Naive thymus-derived CD4-positive, alpha-beta T cell (primary cell): ENCODE measurements at regions of chr3 and their contacts with region 1.

Region 1: DNA sequence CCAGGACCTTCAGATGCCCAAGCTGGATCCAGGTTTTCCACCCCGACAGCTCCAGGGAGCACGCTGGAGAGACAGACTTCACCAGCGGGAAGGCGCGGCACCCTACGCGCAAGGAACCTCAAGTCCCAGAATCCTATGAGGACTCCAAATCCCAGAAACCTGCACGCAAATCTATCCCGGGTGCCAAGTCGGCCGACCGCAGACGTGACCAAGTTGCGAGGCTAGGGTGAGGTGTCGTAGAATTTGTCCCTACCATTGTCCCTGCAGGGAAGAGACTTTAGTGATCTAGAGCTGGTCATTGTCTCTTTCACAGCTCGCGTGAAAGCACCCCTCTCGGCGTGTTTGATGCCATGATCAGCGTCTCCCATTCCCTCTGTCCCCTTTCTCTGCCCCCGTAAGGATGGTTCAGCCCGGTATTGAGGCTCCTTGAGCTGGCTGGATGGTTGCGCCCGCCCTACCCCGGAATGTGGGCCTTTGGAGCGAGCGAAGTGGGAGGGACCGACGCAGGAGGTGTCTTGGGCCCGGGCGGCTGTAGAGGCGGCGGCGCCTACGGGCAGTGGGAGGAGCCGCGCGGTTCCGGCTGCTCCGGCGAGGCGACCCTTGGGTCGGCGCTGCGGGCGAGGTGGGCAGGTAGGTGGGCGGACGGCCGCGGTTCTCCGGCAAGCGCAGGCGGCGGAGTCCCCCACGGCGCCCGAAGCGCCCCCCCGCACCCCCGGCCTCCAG is at the start of gene PRKCI:
- DNase-seq: peak; percentile 63 to 88 (median 83)
- ATAC-seq: peak; percentile 96
- H3K4me3 ChIP-seq: peak within 1 kb of the TSS; percentile 98
- H3K4me3 Mint-ChIP-seq: peak within 1 kb of the TSS; percentile 75 to 97 (median 95)
- H3K27ac ChIP-seq: peak within 1 kb of the TSS; percentile 75
- H3K27ac Mint-ChIP-seq: peak within 1 kb of the TSS; percentile 82 to 97 (median 95)
- H3K4me1 ChIP-seq: peaks cover 0 to 3% of the 10 kb centered on the region in 2 donors
- H3K4me1 Mint-ChIP-seq: peaks cover 15 to 50% (median 38%) of the 10 kb centered on the region in 7 donors
- H3K27me3 ChIP-seq: no peaks in the 10 kb centered on the region
- H3K27me3 Mint-ChIP-seq: peaks cover 0 to 4% (median 0%) of the 10 kb centered on the region in 5 donors
- total RNA-seq, gene PRKCI: 14.7 to 26.2 (median 20.5) TPM

Region 2: DNA sequence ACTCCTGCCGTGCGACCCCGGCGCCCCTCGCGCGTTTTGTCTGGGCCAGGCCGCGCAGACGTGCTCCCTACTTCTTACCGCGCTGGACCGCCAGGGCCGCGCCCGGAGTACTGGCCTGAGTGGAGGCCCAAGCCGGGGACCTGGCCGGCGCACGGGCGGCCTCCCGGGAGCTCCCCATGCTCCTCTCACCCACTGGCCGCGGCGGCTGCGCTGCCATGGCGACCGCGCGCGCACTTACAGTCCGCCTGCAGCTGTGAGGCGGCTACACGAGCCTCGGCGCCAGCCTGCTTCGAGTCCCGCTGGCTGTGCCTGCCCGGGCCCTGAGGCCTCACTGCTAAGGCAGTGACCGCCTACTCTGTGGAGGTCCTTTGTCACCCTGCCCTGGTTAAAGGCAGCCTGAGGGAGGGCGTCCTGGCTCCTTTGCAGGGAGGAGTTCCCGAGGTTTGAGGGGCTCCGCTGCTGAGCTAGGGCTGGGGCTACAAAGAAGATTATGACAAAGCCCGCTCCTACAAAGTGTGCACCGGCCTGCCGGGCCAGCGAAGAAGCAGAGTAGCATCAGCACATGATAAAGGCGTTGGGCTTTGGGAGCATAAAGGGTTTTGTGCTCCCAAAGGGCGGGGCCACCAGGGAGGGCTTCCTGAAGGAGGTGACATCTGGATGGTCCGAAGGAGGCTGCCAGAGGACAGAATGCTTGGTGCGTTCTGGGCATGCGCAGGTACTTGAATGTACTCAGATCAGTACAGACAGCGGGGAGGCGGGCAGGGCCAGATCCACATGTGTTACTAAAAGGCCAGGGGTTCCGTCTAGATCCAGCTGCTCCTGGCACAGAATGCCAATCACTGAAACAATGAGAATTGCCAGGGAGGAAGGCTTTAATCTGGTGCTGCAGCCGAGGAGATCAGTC is 409.5 kb before region 1 on chr3 and contains the starts of genes LRRC34 and LRRIQ4:
- CTCF ChIA-PET with region 1: no interaction called
- POLR2A ChIA-PET with region 1: no interaction called
- intact Hi-C with region 1: loop called in 1 of 2 experiments (anchors 1 kb)
- DNase-seq: peak; percentile 43 to 72 (median 52)
- ATAC-seq: peak; percentile 72
- H3K4me3 ChIP-seq: peak within 1 kb of the TSS; percentile 85
- H3K4me3 Mint-ChIP-seq: peak within 1 kb of the TSS; percentile 79 to 91 (median 86)
- H3K27ac ChIP-seq: peak within 1 kb of the TSS; percentile 59
- H3K27ac Mint-ChIP-seq: peak within 1 kb of the TSS; percentile 3 to 92 (median 71)
- H3K4me1 ChIP-seq: peaks cover 4 to 6% of the 10 kb centered on the region in 2 donors
- H3K4me1 Mint-ChIP-seq: peaks cover 21 to 40% (median 25%) of the 10 kb centered on the region in 7 donors
- H3K27me3 ChIP-seq: no peaks in the 10 kb centered on the region
- H3K27me3 Mint-ChIP-seq: peaks cover 0 to 18% (median 2%) of the 10 kb centered on the region in 5 donors
- total RNA-seq, gene LRRC34: 0.30 to 3.7 (median 0.42) TPM
- total RNA-seq, gene LRRIQ4: 0.12 TPM in 1 of 5 experiments, not detected in the others

Region 3: DNA sequence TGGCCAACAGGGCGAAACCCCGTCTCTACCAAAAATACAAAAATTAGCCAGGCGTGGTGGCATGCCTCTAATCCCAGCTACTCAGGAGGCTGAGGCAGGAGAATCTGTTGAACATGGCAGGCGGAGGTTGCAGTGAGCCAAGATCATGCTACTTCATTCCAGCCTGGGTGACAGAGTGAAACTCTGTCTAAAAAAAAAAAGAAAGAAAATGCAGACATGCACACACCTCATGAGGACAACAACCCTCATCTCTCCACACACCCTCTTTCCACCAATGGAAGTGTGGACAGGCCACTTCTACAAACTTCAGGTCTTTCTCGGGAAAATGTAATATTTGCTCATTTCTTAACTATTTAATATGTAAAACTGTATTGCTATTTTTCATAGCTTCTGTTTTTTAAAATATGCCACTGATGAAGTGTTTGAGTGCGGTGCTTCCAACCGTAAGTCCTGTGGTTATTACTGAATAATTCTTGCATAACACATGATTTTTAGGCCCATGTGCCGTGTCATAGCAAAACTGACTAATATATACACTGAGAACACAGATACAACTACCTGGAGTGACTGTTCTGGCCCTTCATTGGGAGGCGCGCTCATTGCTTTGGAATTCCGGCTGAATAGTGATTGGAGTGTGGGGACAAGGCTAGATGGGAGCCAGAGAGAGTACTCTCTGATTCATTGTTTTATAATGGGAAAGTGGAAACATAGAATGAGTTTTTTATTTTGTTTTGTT is 375.5 kb before region 1 on chr3:
- CTCF ChIA-PET with region 1: no interaction called
- POLR2A ChIA-PET with region 1: no interaction called
- intact Hi-C with region 1: no loop called
- DNase-seq: no peak
- ATAC-seq: peak; percentile 32
- H3K4me3 ChIP-seq: no peak overlapping the region
- H3K4me3 Mint-ChIP-seq: no peak overlapping the region
- H3K27ac ChIP-seq: no peak overlapping the region
- H3K27ac Mint-ChIP-seq: no peak overlapping the region
- H3K4me1 ChIP-seq: no peaks in the 10 kb centered on the region
- H3K4me1 Mint-ChIP-seq: peaks cover 0 to 2% (median 0%) of the 10 kb centered on the region in 7 donors
- H3K27me3 ChIP-seq: no peaks in the 10 kb centered on the region
- H3K27me3 Mint-ChIP-seq: peaks cover 0 to 24% (median 0%) of the 10 kb centered on the region in 5 donors

Region 4: GRCh38 chr3:170189398-170190256 is 32.5 kb before region 1 on chr3:
- CTCF ChIA-PET with region 1: interaction called, 4 read pairs
- POLR2A ChIA-PET with region 1: no interaction called
- intact Hi-C with region 1: loop called (anchors 1 to 2 kb)
- DNase-seq: no peak
- ATAC-seq: peak; percentile 28
- H3K4me3 ChIP-seq: no peak overlapping the region
- H3K4me3 Mint-ChIP-seq: peak overlapping the region in 5 of 10 donors; percentile 10 to 37 (median 23)
- H3K27ac ChIP-seq: no peak overlapping the region
- H3K27ac Mint-ChIP-seq: peak overlapping the region in 2 of 9 donors; percentile 14 to 51
- H3K4me1 ChIP-seq: peaks cover 0 to 4% of the 10 kb centered on the region in 2 donors
- H3K4me1 Mint-ChIP-seq: peaks cover 0 to 14% (median 12%) of the 10 kb centered on the region in 7 donors
- H3K27me3 ChIP-seq: no peaks in the 10 kb centered on the region
- H3K27me3 Mint-ChIP-seq: peaks cover 0 to 21% (median 4%) of the 10 kb centered on the region in 5 donors

Region 5: GRCh38 chr3:170277833-170278580 is 55.9 kb after region 1 on chr3:
- CTCF ChIA-PET with region 1: no interaction called
- POLR2A ChIA-PET with region 1: no interaction called
- intact Hi-C with region 1: loop called (anchors 1 to 5 kb)
- DNase-seq: peak in 6 of 9 donors; percentile 5 to 40 (median 22)
- ATAC-seq: peak; percentile 38
- H3K4me3 ChIP-seq: peak overlapping the region; percentile 39
- H3K4me3 Mint-ChIP-seq: peak overlapping the region; percentile 69 to 94 (median 81)
- H3K27ac ChIP-seq: no peak overlapping the region
- H3K27ac Mint-ChIP-seq: peak overlapping the region; percentile 41 to 94 (median 76)
- H3K4me1 ChIP-seq: peaks cover 5 to 6% of the 10 kb centered on the region in 2 donors
- H3K4me1 Mint-ChIP-seq: peaks cover 15 to 32% (median 23%) of the 10 kb centered on the region in 7 donors
- H3K27me3 ChIP-seq: no peaks in the 10 kb centered on the region
- H3K27me3 Mint-ChIP-seq: no peaks in the 10 kb centered on the region

Region 6: GRCh38 chr3:170397579-170398177 is 175.6 kb after region 1 on chr3:
- CTCF ChIA-PET with region 1: no interaction called
- POLR2A ChIA-PET with region 1: no interaction called
- intact Hi-C with region 1: no loop called
- DNase-seq: no peak
- ATAC-seq: no peak
- H3K4me3 ChIP-seq: no peak overlapping the region
- H3K4me3 Mint-ChIP-seq: no peak overlapping the region
- H3K27ac ChIP-seq: no peak overlapping the region
- H3K27ac Mint-ChIP-seq: peak overlapping the region in 2 of 9 donors; percentile 15 to 48
- H3K4me1 ChIP-seq: no peaks in the 10 kb centered on the region
- H3K4me1 Mint-ChIP-seq: no peaks in the 10 kb centered on the region
- H3K27me3 ChIP-seq: no peaks in the 10 kb centered on the region
- H3K27me3 Mint-ChIP-seq: no peaks in the 10 kb centered on the region

Region 7: GRCh38 chr3:170908235-170909116 is 686.4 kb after region 1 on chr3 and contains the start of gene EIF5A2:
- CTCF ChIA-PET with region 1: no interaction called
- POLR2A ChIA-PET with region 1: no interaction called
- intact Hi-C with region 1: loop called in 1 of 2 experiments (anchors 1 kb)
- DNase-seq: peak; percentile 87 to 97 (median 94)
- ATAC-seq: peak; percentile 98
- H3K4me3 ChIP-seq: peak within 1 kb of the TSS; percentile 50
- H3K4me3 Mint-ChIP-seq: peak within 1 kb of the TSS; percentile 90 to 98 (median 96)
- H3K27ac ChIP-seq: peak within 1 kb of the TSS; percentile 68
- H3K27ac Mint-ChIP-seq: peak within 1 kb of the TSS; percentile 89 to 96 (median 94)
- H3K4me1 ChIP-seq: peaks cover 15 to 16% of the 10 kb centered on the region in 2 donors
- H3K4me1 Mint-ChIP-seq: peaks cover 0 to 31% (median 22%) of the 10 kb centered on the region in 7 donors
- H3K27me3 ChIP-seq: no peaks in the 10 kb centered on the region
- H3K27me3 Mint-ChIP-seq: peaks cover 0 to 19% (median 0%) of the 10 kb centered on the region in 5 donors
- total RNA-seq, gene EIF5A2: 5.5 to 9.8 (median 7.4) TPM